ENCODE measurements at regions of chr13 and their contacts with region 1.

Region 1: GRCh38 chr13:25574437-25575411 is 202.9 kb downstream of the ATP8A2 start:
- DNase-seq: peak in 3 of 4 donors; percentile 53 to 93 (median 89)
- ATAC-seq: peak; percentile 98
- H3K4me3 ChIP-seq: no peak overlapping the region
- H3K27ac ChIP-seq: no peak overlapping the region
- H3K4me1 ChIP-seq: no peaks in the 10 kb centered on the region
- H3K27me3 ChIP-seq: peaks cover 0 to 9% of the 10 kb centered on the region in 2 donors
- CTCF ChIP-seq: peak; percentile 65 to 69

Region 2: DNA sequence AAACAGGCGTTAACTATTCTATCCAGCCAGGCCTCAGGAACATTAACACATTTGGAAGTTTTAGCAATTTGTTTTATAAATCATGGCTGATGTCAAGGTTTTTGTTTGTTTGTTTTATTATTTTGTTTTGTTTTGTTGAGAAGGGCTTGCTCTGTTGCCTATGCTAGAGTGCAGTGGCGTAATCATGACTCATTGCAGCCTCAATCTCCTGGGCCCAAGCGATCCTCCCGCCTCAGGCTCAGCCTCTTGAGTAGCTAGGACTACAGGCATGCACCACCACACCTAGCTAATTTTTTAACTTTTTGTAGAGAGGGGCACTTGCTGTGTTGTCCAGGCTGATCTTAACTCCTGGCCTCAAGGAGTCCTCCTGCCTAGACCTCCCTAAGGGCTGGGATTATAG is 245.0 kb before region 1 on chr13:
- intact Hi-C with region 1: no loop called
- DNase-seq: peak in 1 of 4 donors; percentile 14
- ATAC-seq: no peak
- H3K4me3 ChIP-seq: no peak overlapping the region
- H3K27ac ChIP-seq: no peak overlapping the region
- H3K4me1 ChIP-seq: no peaks in the 10 kb centered on the region
- H3K27me3 ChIP-seq: no peaks in the 10 kb centered on the region
- CTCF ChIP-seq: no peak

Region 3: DNA sequence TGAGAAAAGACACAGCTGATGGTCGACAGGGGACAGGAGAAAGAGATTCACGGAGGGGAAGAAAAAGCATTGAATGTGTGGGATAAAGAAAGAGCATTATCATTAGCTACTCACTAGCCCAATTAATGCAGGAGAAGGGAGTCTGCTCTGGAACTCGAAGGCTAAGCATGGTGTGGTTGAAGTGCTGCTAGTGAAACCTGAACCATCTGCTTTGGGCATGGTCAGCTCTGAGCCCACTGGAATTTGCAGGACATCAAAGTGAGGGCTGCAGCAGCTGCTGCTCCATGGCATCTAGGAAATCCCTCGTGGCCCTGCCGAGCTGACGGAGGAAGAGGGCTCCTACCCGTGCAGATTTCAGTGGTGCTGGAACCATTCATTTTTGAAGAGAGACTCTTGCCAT is 117.4 kb after region 1 on chr13:
- intact Hi-C with region 1: no loop called
- DNase-seq: no peak
- ATAC-seq: no peak
- H3K4me3 ChIP-seq: no peak overlapping the region
- H3K27ac ChIP-seq: no peak overlapping the region
- H3K4me1 ChIP-seq: no peaks in the 10 kb centered on the region
- H3K27me3 ChIP-seq: no peaks in the 10 kb centered on the region
- CTCF ChIP-seq: no peak

Region 4: GRCh38 chr13:26067595-26067994 is 492.9 kb after region 1 on chr13:
- intact Hi-C with region 1: loop called in 1 of 2 experiments (anchors 5 kb)
- DNase-seq: no peak
- ATAC-seq: no peak
- H3K4me3 ChIP-seq: no peak overlapping the region
- H3K27ac ChIP-seq: no peak overlapping the region
- H3K4me1 ChIP-seq: no peaks in the 10 kb centered on the region
- H3K27me3 ChIP-seq: peaks cover 0 to 18% of the 10 kb centered on the region in 2 donors
- CTCF ChIP-seq: no peak